ENCODE measurements at regions of chr21 and their contacts with region 1.

Region 1: GRCh38 chr21:39715804-39716397 is 29.1 kb upstream of the IGSF5 start:
- DNase-seq: peak; percentile 37 to 38
- H3K4me3 ChIP-seq: no peak overlapping the region
- CTCF ChIP-seq: no peak
- POLR2A ChIP-seq: no peak

Region 2: DNA sequence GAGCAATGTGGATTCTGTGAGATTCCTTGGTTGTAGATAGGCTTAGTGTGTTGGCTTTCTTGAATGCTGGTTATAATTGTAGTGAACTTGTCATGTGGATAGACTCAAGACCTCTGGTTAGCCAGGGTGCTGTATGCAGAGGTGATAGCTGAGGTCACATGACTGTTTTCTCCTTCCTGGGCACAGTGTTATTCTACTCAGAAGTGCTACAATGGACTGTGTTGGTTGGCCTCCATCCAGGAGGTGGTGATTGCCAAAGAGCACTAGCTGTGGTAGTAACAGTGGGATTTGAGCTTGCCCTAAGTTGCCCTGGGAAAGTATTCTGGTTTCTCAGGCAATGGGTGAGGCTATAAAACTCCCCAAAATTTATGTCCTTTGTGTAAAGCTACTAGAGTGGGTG is 192.5 kb before region 1 on chr21:
- intact Hi-C with region 1: loop called (anchors 5 kb)
- DNase-seq: no peak
- H3K4me3 ChIP-seq: no peak overlapping the region
- CTCF ChIP-seq: no peak
- POLR2A ChIP-seq: no peak

Region 3: GRCh38 chr21:39650801-39651595 is 64.9 kb before region 1 on chr21:
- intact Hi-C with region 1: loop called (anchors 10 kb)
- DNase-seq: peak in 1 of 2 donors; percentile 68
- H3K4me3 ChIP-seq: no peak overlapping the region
- CTCF ChIP-seq: no peak
- POLR2A ChIP-seq: no peak